Activated naive CD4-positive, alpha-beta T cell treated with anti-CD3 and anti-CD28 coated beads for 36 hours (primary cell): ENCODE measurements at regions of chr11 and their contacts with region 1.

Region 1: GRCh38 chr11:14907411-14908213 is 15.6 kb upstream of the CYP2R1 start:
- DNase-seq: peak; percentile 94
- H3K4me3 Mint-ChIP-seq: no peak overlapping the region
- H3K27ac Mint-ChIP-seq: no peak overlapping the region
- H3K4me1 Mint-ChIP-seq: peaks cover 39% of the 10 kb centered on the region
- H3K27me3 Mint-ChIP-seq: no peaks in the 10 kb centered on the region

Region 2: GRCh38 chr11:14300661-14301304 is 606.8 kb before region 1 on chr11:
- CTCF ChIA-PET with region 1: no interaction called
- intact Hi-C with region 1: loop called (anchors 1 kb)
- DNase-seq: peak; percentile 69
- H3K4me3 Mint-ChIP-seq: no peak overlapping the region
- H3K27ac Mint-ChIP-seq: no peak overlapping the region
- H3K4me1 Mint-ChIP-seq: peaks cover 2% of the 10 kb centered on the region
- H3K27me3 Mint-ChIP-seq: no peaks in the 10 kb centered on the region

Region 3: GRCh38 chr11:14529933-14530332 is 377.7 kb before region 1 on chr11:
- CTCF ChIA-PET with region 1: interaction called, 42 read pairs
- intact Hi-C with region 1: no loop called
- DNase-seq: no peak
- H3K4me3 Mint-ChIP-seq: no peak overlapping the region
- H3K27ac Mint-ChIP-seq: no peak overlapping the region
- H3K4me1 Mint-ChIP-seq: no peaks in the 10 kb centered on the region
- H3K27me3 Mint-ChIP-seq: no peaks in the 10 kb centered on the region

Region 4: GRCh38 chr11:14698771-14699170 is 208.8 kb before region 1 on chr11:
- CTCF ChIA-PET with region 1: interaction called, 14 read pairs
- intact Hi-C with region 1: no loop called
- DNase-seq: no peak
- H3K4me3 Mint-ChIP-seq: peak overlapping the region; percentile 52
- H3K27ac Mint-ChIP-seq: peak overlapping the region; percentile 59
- H3K4me1 Mint-ChIP-seq: peaks cover 46% of the 10 kb centered on the region
- H3K27me3 Mint-ChIP-seq: no peaks in the 10 kb centered on the region

Region 5: GRCh38 chr11:14872032-14872431 is 35.6 kb before region 1 on chr11:
- CTCF ChIA-PET with region 1: interaction called, 10 read pairs
- intact Hi-C with region 1: no loop called
- DNase-seq: no peak
- H3K4me3 Mint-ChIP-seq: no peak overlapping the region
- H3K27ac Mint-ChIP-seq: peak overlapping the region; percentile 67
- H3K4me1 Mint-ChIP-seq: peaks cover 20% of the 10 kb centered on the region
- H3K27me3 Mint-ChIP-seq: no peaks in the 10 kb centered on the region

Region 6: GRCh38 chr11:14974515-14975251 is 67.1 kb after region 1 on chr11:
- CTCF ChIA-PET with region 1: interaction called, 61 read pairs
- intact Hi-C with region 1: loop called (anchors 1 kb)
- DNase-seq: peak; percentile 83
- H3K4me3 Mint-ChIP-seq: peak overlapping the region; percentile 69
- H3K27ac Mint-ChIP-seq: no peak overlapping the region
- H3K4me1 Mint-ChIP-seq: peaks cover 33% of the 10 kb centered on the region
- H3K27me3 Mint-ChIP-seq: peaks cover 61% of the 10 kb centered on the region

Region 7: DNA sequence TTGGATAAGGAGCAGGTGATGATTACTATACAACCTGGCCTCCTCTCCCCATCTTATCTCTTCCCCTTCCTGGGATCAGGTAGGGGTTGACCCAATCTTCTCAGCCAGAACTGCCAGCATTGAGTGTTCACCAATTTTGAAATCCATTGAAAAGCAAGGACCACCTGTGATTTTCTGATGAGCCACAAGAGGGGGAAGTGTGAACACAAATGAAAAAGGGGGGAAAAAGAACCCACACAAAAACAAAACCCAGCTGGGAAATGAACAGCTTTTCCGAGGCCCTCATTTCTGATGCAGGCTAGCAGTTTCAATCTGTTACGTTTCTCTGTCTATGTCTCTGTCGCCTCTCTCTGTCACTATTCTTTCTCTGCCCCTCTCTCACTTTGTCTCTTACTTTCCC is 369.0 kb after region 1 on chr11:
- CTCF ChIA-PET with region 1: no interaction called
- intact Hi-C with region 1: no loop called
- DNase-seq: no peak
- H3K4me3 Mint-ChIP-seq: no peak overlapping the region
- H3K27ac Mint-ChIP-seq: no peak overlapping the region
- H3K4me1 Mint-ChIP-seq: no peaks in the 10 kb centered on the region
- H3K27me3 Mint-ChIP-seq: peaks cover 11% of the 10 kb centered on the region